ENCODE measurements at regions of chr16 and their contacts with region 1.

Region 1: DNA sequence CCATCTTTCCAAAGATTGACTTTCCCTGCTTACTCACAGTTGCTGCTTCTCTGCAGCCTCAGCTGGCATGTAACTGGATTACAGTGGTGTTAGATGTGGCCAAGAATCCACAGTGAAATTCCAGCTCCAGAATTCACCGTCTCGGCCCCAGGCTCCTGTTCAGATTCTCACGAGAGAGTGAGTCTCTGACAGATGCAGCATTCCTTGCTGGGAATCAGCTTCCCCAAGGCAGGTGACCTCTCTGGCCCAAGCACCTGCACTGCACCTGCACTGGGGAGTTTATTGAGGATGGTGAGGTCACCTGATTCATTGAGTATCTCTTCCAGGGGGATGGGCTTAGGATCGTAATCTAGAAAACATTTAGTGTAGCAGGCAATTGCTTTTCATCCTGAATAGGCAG is 600.5 kb upstream of the RBFOX1 start:
- DNase-seq: no peak
- ATAC-seq: no peak
- H3K4me3 Mint-ChIP-seq: no peak overlapping the region
- H3K27ac Mint-ChIP-seq: no peak overlapping the region
- H3K4me1 Mint-ChIP-seq: no peaks in the 10 kb centered on the region
- H3K27me3 Mint-ChIP-seq: no peaks in the 10 kb centered on the region
- CTCF ChIP-seq: no peak

Region 2: DNA sequence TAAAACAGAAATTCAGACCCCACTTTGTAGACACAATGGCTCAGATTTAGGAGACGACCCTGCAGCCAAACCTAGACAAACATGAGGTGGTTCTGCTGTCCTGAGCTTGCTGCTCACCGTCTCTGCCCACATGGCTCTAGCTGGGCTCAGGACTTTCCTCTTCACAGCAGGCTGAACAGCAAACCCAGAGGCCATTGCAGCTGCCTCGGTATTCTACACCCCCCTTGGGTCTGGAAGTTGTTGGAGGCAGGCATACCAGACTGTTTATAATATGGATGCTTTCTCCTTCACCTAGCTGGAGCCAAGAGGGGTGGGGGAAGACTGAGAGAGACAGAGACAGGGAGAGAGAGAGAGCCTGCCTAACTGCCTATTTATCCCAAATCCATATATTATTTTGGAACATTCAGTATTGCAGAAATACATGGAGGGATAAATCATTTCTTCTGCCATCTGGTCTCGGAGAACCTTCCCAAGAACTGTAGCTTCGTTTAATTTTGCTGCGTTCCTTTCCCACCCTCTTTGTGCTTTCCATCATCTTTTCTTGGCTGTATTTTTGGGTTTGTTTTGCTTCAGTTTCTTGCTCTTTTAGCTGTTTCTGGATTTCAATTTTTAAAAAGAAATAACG is 27.7 kb before region 1 on chr16:
- CTCF ChIA-PET with region 1: no interaction called
- POLR2A ChIA-PET with region 1: no interaction called
- intact Hi-C with region 1: no loop called
- DNase-seq: no peak
- ATAC-seq: no peak
- H3K4me3 Mint-ChIP-seq: no peak overlapping the region
- H3K27ac Mint-ChIP-seq: no peak overlapping the region
- H3K4me1 Mint-ChIP-seq: no peaks in the 10 kb centered on the region
- H3K27me3 Mint-ChIP-seq: no peaks in the 10 kb centered on the region
- CTCF ChIP-seq: no peak

Region 3: GRCh38 chr16:6797223-6797622 is 65.1 kb after region 1 on chr16:
- CTCF ChIA-PET with region 1: no interaction called
- POLR2A ChIA-PET with region 1: no interaction called
- intact Hi-C with region 1: loop called (anchors 10 kb)
- DNase-seq: no peak
- ATAC-seq: no peak
- H3K4me3 Mint-ChIP-seq: no peak overlapping the region
- H3K27ac Mint-ChIP-seq: no peak overlapping the region
- H3K4me1 Mint-ChIP-seq: no peaks in the 10 kb centered on the region
- H3K27me3 Mint-ChIP-seq: no peaks in the 10 kb centered on the region
- CTCF ChIP-seq: no peak

Measured in activated CD8-positive, alpha-beta T cell treated with anti-CD3 and anti-CD28 coated beads for 36 hours (primary cell).